Activated CD8-positive, alpha-beta T cell treated with anti-CD3 and anti-CD28 coated beads, Interleukin-2, amount 10 ng/mL, durations not matched to agents 7 days and 5 days (primary cell): ENCODE measurements at regions of chr5 and their contacts with region 1.

Region 1: GRCh38 chr5:91383027-91383955 is at the start of gene ARRDC3:
- DNase-seq: peak; percentile 97
- ATAC-seq: peak; percentile 59
- H3K4me3 Mint-ChIP-seq: peak within 1 kb of the TSS; percentile 87
- H3K27ac Mint-ChIP-seq: peak within 1 kb of the TSS; percentile 99
- H3K4me1 Mint-ChIP-seq: peaks cover 22% of the 10 kb centered on the region
- H3K27me3 Mint-ChIP-seq: peaks cover 2% of the 10 kb centered on the region
- total RNA-seq, gene ARRDC3: 36.5 to 37.1 TPM

Region 2: GRCh38 chr5:90940227-90940995 is 442.9 kb before region 1 on chr5:
- CTCF ChIA-PET with region 1: interaction called, 11 read pairs
- POLR2A ChIA-PET with region 1: interaction called, 3 read pairs
- DNase-seq: peak; percentile 60
- ATAC-seq: peak; percentile 84
- H3K4me3 Mint-ChIP-seq: no peak overlapping the region
- H3K27ac Mint-ChIP-seq: peak overlapping the region; percentile 11
- H3K4me1 Mint-ChIP-seq: peaks cover 11% of the 10 kb centered on the region
- H3K27me3 Mint-ChIP-seq: no peaks in the 10 kb centered on the region

Region 3: GRCh38 chr5:91183737-91184136 is 199.6 kb before region 1 on chr5:
- CTCF ChIA-PET with region 1: interaction called, 36 read pairs
- POLR2A ChIA-PET with region 1: interaction called, 4 read pairs
- DNase-seq: no peak
- ATAC-seq: no peak
- H3K4me3 Mint-ChIP-seq: no peak overlapping the region
- H3K27ac Mint-ChIP-seq: no peak overlapping the region
- H3K4me1 Mint-ChIP-seq: peaks cover 23% of the 10 kb centered on the region
- H3K27me3 Mint-ChIP-seq: peaks cover 11% of the 10 kb centered on the region

Region 4: DNA sequence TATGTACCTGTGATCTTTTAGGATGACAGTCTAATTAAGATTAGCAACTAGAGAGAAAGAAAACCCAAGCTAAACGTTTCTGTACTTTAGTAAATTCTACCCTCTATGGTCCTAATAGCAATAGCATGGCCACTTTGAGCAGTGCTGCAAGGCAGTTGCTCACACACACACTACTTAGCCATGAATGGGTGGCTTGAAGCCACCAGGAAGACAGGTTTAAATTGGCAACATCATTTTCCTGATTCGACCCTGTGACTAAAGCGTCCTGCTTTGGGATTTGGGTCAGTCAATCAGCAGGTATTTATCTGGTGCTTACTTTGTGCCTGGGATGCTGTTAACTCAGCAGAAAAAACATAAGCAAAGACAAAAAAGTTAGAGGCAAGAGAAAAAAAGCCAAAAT is 150.8 kb before region 1 on chr5:
- CTCF ChIA-PET with region 1: interaction called, 109 read pairs
- POLR2A ChIA-PET with region 1: interaction called, 9 read pairs
- DNase-seq: no peak
- ATAC-seq: no peak
- H3K4me3 Mint-ChIP-seq: no peak overlapping the region
- H3K27ac Mint-ChIP-seq: no peak overlapping the region
- H3K4me1 Mint-ChIP-seq: no peaks in the 10 kb centered on the region
- H3K27me3 Mint-ChIP-seq: peaks cover 5% of the 10 kb centered on the region

Region 5: DNA sequence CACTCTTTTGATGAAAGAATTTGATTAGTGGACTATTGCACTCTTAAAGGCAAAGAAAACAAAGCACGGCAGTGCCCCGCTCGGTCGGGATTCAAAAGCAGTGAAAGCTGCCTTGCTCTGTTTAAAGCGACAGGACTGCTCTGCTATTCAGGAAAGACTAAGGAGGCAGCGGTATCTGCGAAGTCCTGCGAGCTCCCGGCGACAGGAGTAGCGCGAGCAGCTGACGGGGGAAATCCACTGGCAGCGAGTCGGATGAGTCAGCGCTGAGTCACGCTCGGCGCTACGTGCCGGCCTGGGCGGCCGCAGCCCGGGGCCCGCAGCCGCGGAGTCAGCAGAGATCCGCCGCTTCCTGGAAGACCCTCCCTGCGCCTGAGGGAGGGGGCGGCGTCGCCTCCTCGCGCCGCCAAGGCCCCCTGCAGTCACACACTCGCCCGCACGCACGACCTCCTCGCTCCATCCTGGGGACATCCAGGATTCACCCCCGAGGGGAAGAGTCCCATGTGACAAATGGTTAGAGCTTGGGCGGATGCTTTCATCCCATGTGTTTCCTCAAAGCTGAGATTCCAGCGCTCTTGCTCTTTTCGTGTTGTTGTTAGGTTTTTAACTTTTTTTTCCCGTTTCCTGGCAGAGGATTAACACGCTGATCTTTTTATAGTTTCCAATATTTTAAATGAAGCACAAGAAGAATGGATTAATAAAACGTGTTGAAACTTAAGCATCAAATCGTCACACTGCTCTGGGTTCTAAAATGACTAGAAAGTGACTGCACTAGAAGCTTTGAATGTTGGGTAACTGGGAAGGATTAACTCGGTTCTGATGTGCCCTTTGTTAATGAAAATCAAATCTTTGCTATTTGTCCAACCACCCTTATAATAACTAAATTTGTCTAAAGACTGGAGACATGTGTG is 102.7 kb before region 1 on chr5:
- CTCF ChIA-PET with region 1: interaction called, 18 read pairs
- POLR2A ChIA-PET with region 1: interaction called, 36 read pairs
- DNase-seq: peak; percentile 85
- ATAC-seq: peak; percentile 93
- H3K4me3 Mint-ChIP-seq: peak overlapping the region; percentile 79
- H3K27ac Mint-ChIP-seq: peak overlapping the region; percentile 76
- H3K4me1 Mint-ChIP-seq: peaks cover 22% of the 10 kb centered on the region
- H3K27me3 Mint-ChIP-seq: peaks cover 2% of the 10 kb centered on the region

Region 6: GRCh38 chr5:91361790-91362189 is 21.5 kb before region 1 on chr5:
- CTCF ChIA-PET with region 1: interaction called, 12 read pairs
- POLR2A ChIA-PET with region 1: interaction called, 6 read pairs
- DNase-seq: no peak
- ATAC-seq: no peak
- H3K4me3 Mint-ChIP-seq: no peak overlapping the region
- H3K27ac Mint-ChIP-seq: no peak overlapping the region
- H3K4me1 Mint-ChIP-seq: peaks cover 18% of the 10 kb centered on the region
- H3K27me3 Mint-ChIP-seq: peaks cover 5% of the 10 kb centered on the region

Region 7: DNA sequence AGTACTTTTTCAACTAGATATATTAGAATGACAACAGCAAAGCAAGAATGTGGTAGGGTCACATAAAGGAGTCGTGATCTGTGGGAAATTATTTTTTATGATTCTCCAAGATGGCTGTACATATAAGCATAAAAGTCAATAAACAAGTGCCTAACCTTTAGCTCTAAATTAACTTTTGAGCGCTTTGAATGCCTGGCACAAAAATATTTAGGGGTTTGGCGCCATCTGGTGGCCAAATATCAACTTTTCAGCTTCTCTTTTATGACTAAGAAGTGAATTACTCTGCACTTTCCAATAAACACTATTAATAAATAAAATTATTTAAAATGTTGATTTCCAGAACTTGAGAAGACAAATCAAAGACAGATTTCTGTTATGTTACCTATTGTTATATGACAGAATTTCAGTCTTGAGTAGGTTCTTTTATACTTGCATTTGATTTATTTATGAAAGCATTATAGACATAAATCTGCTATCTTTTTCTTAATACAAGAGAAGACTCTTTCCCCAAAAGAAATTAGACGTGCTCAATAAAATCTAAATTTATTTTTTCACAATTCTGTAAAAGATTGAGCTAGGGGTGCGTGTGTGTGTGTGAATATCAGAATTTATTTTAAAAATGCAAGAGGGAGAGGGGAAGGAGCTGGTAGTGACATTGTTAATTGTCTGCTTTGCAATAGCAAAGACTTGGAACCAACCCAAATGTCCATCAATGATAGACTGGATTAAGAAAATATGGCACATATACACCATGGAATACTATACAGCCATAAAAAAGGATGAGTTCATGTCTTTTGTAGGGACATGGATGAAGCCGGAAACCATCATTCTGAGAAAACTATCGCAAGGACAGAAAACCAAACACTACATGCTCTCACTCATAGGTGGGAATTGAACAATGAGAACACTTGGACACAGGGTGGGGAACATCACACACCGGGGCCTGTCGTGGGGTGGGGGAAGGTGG is 36.6 kb after region 1 on chr5:
- CTCF ChIA-PET with region 1: interaction called, 138 read pairs
- POLR2A ChIA-PET with region 1: interaction called, 7 read pairs
- DNase-seq: peak; percentile 82
- ATAC-seq: no peak
- H3K4me3 Mint-ChIP-seq: no peak overlapping the region
- H3K27ac Mint-ChIP-seq: no peak overlapping the region
- H3K4me1 Mint-ChIP-seq: peaks cover 3% of the 10 kb centered on the region
- H3K27me3 Mint-ChIP-seq: peaks cover 2% of the 10 kb centered on the region